ENCODE measurements at regions of chr1 and their contacts with region 1.

Region 1: GRCh38 chr1:25796811-25797458 is 3.1 kb upstream of the SELENON start:
- DNase-seq: peak; percentile 33 to 92
- H3K4me3 ChIP-seq: peak overlapping the region in 1 of 2 donors; percentile 9
- H3K27ac ChIP-seq: no peak overlapping the region
- H3K4me1 ChIP-seq: peaks cover 4 to 20% of the 10 kb centered on the region in 2 donors
- H3K27me3 ChIP-seq: no peaks in the 10 kb centered on the region
- CTCF ChIP-seq: peak; percentile 78 to 82 (median 79)

Region 2: DNA sequence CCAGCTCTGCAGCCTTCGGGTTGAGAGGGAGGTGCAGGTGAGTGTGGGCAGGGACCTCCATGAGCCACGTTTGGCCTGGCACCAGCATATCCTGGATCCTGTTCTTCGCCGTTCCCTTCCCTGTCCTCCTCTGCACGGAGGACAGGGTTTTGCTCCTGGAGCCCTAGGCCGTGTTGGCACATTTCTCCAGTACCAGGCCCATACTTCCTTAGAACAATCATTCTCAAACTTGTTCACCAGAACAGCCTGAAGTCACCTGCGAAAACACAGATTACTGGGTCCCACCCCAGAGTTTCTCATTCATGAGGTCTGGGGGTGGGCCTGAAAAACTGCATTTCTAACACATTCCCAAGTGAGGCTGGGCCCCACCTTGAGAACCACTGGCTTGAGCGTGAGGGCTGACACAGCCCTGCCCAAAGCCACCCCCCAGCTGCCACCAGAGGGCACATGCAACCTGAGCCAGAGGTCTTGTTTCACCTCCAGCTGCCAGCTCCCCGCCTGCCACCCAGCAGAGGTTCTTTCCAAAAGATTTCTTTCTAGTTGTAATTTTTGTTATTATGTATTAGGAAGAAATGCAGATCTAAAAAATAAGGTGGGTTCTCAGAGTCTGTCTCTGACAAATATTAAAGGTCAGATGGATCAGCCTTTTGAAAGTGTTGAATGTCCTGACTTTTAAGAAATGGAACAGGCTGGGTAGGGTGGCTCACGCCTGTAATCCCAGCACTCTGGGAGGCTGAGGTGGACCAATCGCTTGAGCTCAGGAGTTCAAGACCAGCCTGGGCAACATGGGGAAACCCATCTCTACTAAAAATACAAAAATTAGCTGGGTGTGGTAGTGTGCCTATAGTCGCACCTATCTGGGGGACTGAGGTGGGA is 293.1 kb before region 1 on chr1:
- intact Hi-C with region 1: loop called (anchors 5 kb)
- DNase-seq: peak in 1 of 2 donors; percentile 75
- H3K4me3 ChIP-seq: no peak overlapping the region
- H3K27ac ChIP-seq: peak overlapping the region; percentile 52 to 54
- H3K4me1 ChIP-seq: peaks cover 24 to 53% of the 10 kb centered on the region in 2 donors
- H3K27me3 ChIP-seq: no peaks in the 10 kb centered on the region
- CTCF ChIP-seq: peak; percentile 46 to 67 (median 54)

Region 3: GRCh38 chr1:25520446-25521061 is 276.4 kb before region 1 on chr1:
- intact Hi-C with region 1: loop called (anchors 5 kb)
- DNase-seq: peak in 1 of 2 donors; percentile 75
- H3K4me3 ChIP-seq: no peak overlapping the region
- H3K27ac ChIP-seq: no peak overlapping the region
- H3K4me1 ChIP-seq: no peaks in the 10 kb centered on the region
- H3K27me3 ChIP-seq: no peaks in the 10 kb centered on the region
- CTCF ChIP-seq: peak; percentile 73 to 82 (median 74)

Region 4: DNA sequence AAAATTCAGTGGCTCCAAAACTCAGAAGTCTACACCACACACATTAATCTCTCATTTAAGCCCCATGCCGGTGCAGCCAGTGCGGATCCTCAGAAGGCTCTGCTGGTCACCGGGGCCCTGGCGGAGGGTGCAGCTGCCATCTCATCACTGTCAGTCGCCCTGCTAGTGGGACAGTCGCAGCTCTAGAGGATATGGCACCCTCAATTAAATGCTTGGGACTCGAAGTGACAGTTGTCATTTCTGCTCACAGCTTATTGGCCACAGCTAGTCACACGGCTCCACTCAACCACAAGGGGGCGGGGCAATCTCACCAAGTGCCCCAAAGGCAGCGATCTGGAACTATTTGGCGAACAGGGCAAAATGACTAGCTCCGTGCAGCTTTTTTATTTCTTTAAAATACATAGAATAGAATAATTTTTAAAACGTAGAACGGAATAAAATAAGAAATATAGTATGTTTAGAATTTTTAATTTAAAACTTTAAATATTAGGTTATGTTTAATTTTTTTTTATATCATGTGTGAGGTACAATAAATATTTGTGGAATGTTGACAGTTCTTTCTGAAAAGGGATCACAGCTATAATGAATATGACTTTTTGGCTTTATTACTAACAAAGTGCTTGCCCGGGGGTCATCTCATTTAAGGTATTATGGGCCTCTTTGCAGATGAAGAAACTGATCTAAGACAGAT is 188.3 kb before region 1 on chr1:
- intact Hi-C with region 1: loop called (anchors 1 kb)
- DNase-seq: peak; percentile 45 to 93
- H3K4me3 ChIP-seq: peak overlapping the region; percentile 2 to 21
- H3K27ac ChIP-seq: no peak overlapping the region
- H3K4me1 ChIP-seq: peaks cover 0 to 2% of the 10 kb centered on the region in 2 donors
- H3K27me3 ChIP-seq: no peaks in the 10 kb centered on the region
- CTCF ChIP-seq: peak; percentile 52 to 81 (median 59)

Region 5: DNA sequence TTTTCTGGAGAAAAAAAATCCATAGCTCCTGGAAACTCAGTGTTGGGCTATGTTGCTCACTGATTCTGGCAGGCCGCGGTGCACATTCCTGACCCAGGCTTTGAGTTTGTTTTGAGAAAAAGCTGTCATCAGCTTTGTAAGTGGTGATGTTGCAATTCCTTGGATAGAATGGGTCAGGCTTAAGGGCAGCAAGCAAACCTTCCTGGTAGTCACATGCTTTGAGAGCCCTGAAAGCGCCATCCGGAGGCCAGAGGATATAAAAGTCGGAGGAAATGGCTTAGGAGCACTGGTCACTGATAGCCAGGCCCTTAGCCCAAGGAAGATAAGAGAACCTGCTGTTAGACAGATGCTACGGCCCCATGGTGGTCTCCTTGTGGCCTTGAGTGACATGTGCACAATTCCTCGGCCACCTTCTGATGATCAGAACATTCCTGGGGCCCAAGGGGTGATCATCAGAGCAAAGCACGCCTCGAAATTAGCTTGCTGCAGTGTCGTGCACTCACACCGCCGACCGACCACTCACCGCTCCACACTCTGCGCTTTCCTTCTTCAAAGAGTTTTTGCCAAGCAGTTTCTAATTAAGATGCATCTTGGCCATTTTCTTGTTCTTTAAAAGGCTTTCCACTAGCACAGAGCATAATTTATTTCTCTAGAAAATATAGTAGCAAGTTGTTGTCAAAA is 101.7 kb before region 1 on chr1:
- intact Hi-C with region 1: loop called (anchors 2 kb)
- DNase-seq: peak; percentile 44 to 94
- H3K4me3 ChIP-seq: peak overlapping the region in 1 of 2 donors; percentile 7
- H3K27ac ChIP-seq: peak overlapping the region; percentile 81 to 83
- H3K4me1 ChIP-seq: peaks cover 10 to 43% of the 10 kb centered on the region in 2 donors
- H3K27me3 ChIP-seq: no peaks in the 10 kb centered on the region
- CTCF ChIP-seq: peak in 2 of 3 experiments; percentile 7 to 18

Region 6: GRCh38 chr1:25743826-25744581 is 52.9 kb before region 1 on chr1:
- intact Hi-C with region 1: loop called (anchors 2 kb)
- DNase-seq: peak; percentile 25 to 83
- H3K4me3 ChIP-seq: peak overlapping the region in 1 of 2 donors; percentile 23
- H3K27ac ChIP-seq: peak overlapping the region; percentile 85 to 93
- H3K4me1 ChIP-seq: peaks cover 11 to 26% of the 10 kb centered on the region in 2 donors
- H3K27me3 ChIP-seq: no peaks in the 10 kb centered on the region
- CTCF ChIP-seq: peak; percentile 32 to 55 (median 36)